Tibial artery (tissue), 4 donors: ENCODE measurements at regions of chr6 and their contacts with region 1.

Region 1: GRCh38 chr6:142946181-142946923 is 1.4 kb upstream of the HIVEP2 start:
- DNase-seq: peak; percentile 98 to 100
- H3K4me3 ChIP-seq: peak overlapping the region; percentile 87 to 88
- H3K27ac ChIP-seq: peak overlapping the region; percentile 96 to 97
- H3K4me1 ChIP-seq: peaks cover 0 to 20% (median 11%) of the 10 kb centered on the region in 4 donors
- H3K27me3 ChIP-seq: no peaks in the 10 kb centered on the region
- CTCF ChIP-seq: no peak

Region 2: GRCh38 chr6:142885182-142885867 is 61.0 kb before region 1 on chr6:
- intact Hi-C with region 1: loop called (anchors 5 kb)
- DNase-seq: no peak
- H3K4me3 ChIP-seq: peak overlapping the region; percentile 48 to 52
- H3K27ac ChIP-seq: peak overlapping the region; percentile 56 to 74
- H3K4me1 ChIP-seq: peaks cover 0 to 56% (median 14%) of the 10 kb centered on the region in 4 donors
- H3K27me3 ChIP-seq: no peaks in the 10 kb centered on the region
- CTCF ChIP-seq: no peak

Region 3: GRCh38 chr6:143060354-143060805 is 114.0 kb after region 1 on chr6:
- intact Hi-C with region 1: loop called (anchors 2 kb)
- DNase-seq: peak; percentile 87 to 92
- H3K4me3 ChIP-seq: peak overlapping the region; percentile 90 to 98
- H3K27ac ChIP-seq: peak overlapping the region; percentile 98 to 99
- H3K4me1 ChIP-seq: peaks cover 0 to 19% (median 14%) of the 10 kb centered on the region in 4 donors
- H3K27me3 ChIP-seq: no peaks in the 10 kb centered on the region
- CTCF ChIP-seq: peak; percentile 8 to 12

Region 4: GRCh38 chr6:143098054-143098671 is 151.8 kb after region 1 on chr6:
- intact Hi-C with region 1: no loop called
- DNase-seq: no peak
- H3K4me3 ChIP-seq: no peak overlapping the region
- H3K27ac ChIP-seq: no peak overlapping the region
- H3K4me1 ChIP-seq: no peaks in the 10 kb centered on the region
- H3K27me3 ChIP-seq: no peaks in the 10 kb centered on the region
- CTCF ChIP-seq: no peak